Activated T-helper 2 cell treated with anti-CD3 and anti-CD28 coated beads, Interferon-gamma antibody, Interleukin-2, Interleukin-4, amounts not matched to agents 10 μg/mL and 5 μg/mL and 100 μg/mL, durations not matched to agents 14 hours and 24 hours and 36 hours (primary cell): ENCODE measurements at regions of chr7 and their contacts with region 1.

Region 1: DNA sequence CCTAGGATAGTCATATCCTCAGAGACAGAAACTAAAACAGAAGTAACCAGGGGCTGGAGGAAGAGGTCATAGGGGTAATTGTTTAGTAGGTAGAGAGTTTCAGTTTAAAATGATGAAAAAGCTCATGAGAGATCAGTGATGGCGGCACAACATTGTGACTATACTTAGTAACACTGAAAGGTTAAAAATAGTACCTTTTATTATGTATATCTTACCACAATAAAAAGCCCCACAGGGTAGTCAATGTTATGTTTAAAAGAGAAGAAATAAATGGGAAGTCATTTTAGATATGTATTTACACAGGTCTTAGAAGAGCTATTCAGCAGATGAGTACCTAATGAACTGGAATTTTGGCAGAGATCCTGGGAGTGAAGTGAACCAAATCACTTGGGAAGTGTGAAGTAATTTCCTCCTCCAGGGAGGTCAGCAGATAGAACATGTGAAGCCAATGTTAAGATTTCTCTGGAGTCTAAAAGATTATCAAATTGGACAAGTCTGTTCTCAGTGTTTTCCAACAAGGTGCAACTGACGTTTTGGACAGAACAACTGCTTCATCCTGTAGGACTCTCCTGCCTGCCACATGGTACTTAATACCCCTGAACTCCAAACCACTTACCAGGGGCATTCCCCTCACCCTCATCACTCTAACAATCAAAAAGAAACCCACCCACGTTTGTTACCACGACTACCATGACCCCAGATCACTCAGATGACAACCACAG is 6.4 kb downstream of the CDCA7L start:
- DNase-seq: peak; percentile 30
- H3K4me3 Mint-ChIP-seq: peak overlapping the region; percentile 41
- H3K27ac Mint-ChIP-seq: peak overlapping the region; percentile 88
- H3K4me1 Mint-ChIP-seq: peaks cover 59% of the 10 kb centered on the region
- H3K27me3 Mint-ChIP-seq: no peaks in the 10 kb centered on the region

Region 2: GRCh38 chr7:21365866-21366624 is 573.3 kb before region 1 on chr7:
- intact Hi-C with region 1: loop called (anchors 2 kb)
- DNase-seq: no peak
- H3K4me3 Mint-ChIP-seq: no peak overlapping the region
- H3K27ac Mint-ChIP-seq: peak overlapping the region; percentile 25
- H3K4me1 Mint-ChIP-seq: peaks cover 56% of the 10 kb centered on the region
- H3K27me3 Mint-ChIP-seq: no peaks in the 10 kb centered on the region

Region 3: DNA sequence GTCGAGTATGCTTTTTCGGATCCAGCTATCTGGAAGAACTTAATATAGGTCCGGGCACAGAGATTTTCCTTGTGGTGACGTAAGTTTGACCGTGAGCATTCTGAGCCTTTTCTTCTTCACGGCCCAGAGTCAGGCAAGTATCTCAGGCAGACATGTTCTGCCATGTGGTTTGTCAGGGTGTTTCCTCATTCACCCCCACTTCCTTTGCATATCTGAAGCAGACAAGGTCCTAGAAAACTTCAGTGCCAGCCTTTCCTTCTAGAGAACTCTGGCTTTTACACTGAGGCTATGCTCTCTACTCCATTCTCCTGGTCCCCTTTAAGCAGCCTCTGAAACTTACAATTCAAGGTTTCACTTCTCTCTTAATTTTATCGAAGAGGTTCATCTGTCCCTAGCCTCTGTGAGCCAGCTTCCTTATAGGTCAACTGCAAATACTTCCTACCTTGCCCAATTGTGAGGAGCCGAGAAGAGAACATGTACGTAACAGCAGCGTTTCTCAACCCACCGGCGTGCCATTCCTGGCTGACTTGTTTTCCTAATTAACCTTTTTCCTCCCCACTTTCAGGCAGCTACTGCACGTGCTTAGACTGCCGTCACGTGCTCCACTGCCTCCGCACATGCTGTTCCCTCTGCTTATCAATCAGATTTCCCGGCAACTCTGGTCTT is 40.9 kb before region 1 on chr7:
- intact Hi-C with region 1: loop called (anchors 2 kb)
- DNase-seq: no peak
- H3K4me3 Mint-ChIP-seq: peak overlapping the region; percentile 72
- H3K27ac Mint-ChIP-seq: peak overlapping the region; percentile 90
- H3K4me1 Mint-ChIP-seq: peaks cover 19% of the 10 kb centered on the region
- H3K27me3 Mint-ChIP-seq: no peaks in the 10 kb centered on the region

Region 4: GRCh38 chr7:22082886-22083703 is 143.8 kb after region 1 on chr7:
- intact Hi-C with region 1: loop called (anchors 2 kb)
- DNase-seq: peak; percentile 69
- H3K4me3 Mint-ChIP-seq: peak overlapping the region; percentile 71
- H3K27ac Mint-ChIP-seq: no peak overlapping the region
- H3K4me1 Mint-ChIP-seq: peaks cover 11% of the 10 kb centered on the region
- H3K27me3 Mint-ChIP-seq: peaks cover 52% of the 10 kb centered on the region

Region 5: GRCh38 chr7:22992874-22993840 is 1053.9 kb after region 1 on chr7:
- intact Hi-C with region 1: loop called (anchors 5 kb)
- DNase-seq: no peak
- H3K4me3 Mint-ChIP-seq: peak overlapping the region; percentile 9
- H3K27ac Mint-ChIP-seq: peak overlapping the region; percentile 84
- H3K4me1 Mint-ChIP-seq: peaks cover 63% of the 10 kb centered on the region
- H3K27me3 Mint-ChIP-seq: no peaks in the 10 kb centered on the region